Mucosa of descending colon (tissue), 3 donors: ENCODE measurements at regions of chr6 and their contacts with region 1.

Region 1: GRCh38 chr6:129598244-129599187 is 111.5 kb downstream of the ARHGAP18 start:
- DNase-seq: peak in 1 of 3 donors; percentile 42
- ATAC-seq: peak; percentile 85
- H3K4me3 ChIP-seq: no peak overlapping the region
- H3K4me1 ChIP-seq: no peaks in the 10 kb centered on the region
- CTCF ChIP-seq: peak; percentile 40

Region 2: DNA sequence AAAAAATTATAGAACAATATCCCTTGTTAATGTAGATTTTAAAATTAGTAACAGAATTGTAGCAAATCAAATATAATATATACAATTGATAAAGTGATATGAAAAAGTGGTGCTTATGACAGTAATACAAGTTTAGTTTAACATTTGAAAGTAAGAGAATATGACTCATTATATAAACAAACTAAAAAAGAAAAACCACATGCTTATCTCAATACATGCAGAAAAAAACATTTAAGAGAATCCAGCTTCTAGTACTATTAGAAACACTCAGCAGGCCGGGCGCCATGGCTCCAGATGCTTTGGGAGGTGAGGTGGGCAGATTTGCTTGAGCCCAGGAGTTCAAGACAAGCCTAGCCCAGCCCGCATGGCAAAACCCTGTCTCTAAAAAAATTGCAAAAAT is 776.2 kb before region 1 on chr6:
- intact Hi-C with region 1: no loop called
- DNase-seq: no peak
- ATAC-seq: no peak
- H3K4me3 ChIP-seq: no peak overlapping the region
- H3K4me1 ChIP-seq: no peaks in the 10 kb centered on the region
- CTCF ChIP-seq: no peak

Region 3: DNA sequence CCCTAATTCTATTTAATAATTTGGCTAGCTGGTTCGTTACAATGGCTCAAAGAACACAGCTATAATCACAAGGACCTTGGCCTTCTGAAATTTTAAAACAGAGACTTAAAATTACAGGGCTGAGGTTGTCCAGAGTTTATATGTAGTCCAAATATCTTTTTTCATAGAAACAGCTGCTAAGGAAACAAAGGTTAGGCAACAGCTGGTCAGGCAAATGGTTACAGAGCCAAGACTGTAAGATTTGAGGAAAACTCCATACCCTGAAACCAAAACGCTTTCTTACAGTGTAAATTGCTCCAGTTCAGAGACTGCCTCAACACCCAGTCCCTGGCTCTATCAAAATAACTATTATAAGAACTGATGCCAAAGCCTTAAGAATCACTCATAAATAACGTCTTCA is 121.2 kb after region 1 on chr6:
- intact Hi-C with region 1: loop called in 1 of 2 experiments (anchors 10 kb)
- DNase-seq: no peak
- ATAC-seq: no peak
- H3K4me3 ChIP-seq: no peak overlapping the region
- H3K4me1 ChIP-seq: no peaks in the 10 kb centered on the region
- CTCF ChIP-seq: no peak

Region 4: GRCh38 chr6:129730477-129731165 is 132.1 kb after region 1 on chr6:
- intact Hi-C with region 1: loop called (anchors 5 to 10 kb)
- DNase-seq: peak in 1 of 3 donors; percentile 53
- ATAC-seq: peak; percentile 46
- H3K4me3 ChIP-seq: no peak overlapping the region
- H3K4me1 ChIP-seq: no peaks in the 10 kb centered on the region
- CTCF ChIP-seq: peak; percentile 14

Region 5: DNA sequence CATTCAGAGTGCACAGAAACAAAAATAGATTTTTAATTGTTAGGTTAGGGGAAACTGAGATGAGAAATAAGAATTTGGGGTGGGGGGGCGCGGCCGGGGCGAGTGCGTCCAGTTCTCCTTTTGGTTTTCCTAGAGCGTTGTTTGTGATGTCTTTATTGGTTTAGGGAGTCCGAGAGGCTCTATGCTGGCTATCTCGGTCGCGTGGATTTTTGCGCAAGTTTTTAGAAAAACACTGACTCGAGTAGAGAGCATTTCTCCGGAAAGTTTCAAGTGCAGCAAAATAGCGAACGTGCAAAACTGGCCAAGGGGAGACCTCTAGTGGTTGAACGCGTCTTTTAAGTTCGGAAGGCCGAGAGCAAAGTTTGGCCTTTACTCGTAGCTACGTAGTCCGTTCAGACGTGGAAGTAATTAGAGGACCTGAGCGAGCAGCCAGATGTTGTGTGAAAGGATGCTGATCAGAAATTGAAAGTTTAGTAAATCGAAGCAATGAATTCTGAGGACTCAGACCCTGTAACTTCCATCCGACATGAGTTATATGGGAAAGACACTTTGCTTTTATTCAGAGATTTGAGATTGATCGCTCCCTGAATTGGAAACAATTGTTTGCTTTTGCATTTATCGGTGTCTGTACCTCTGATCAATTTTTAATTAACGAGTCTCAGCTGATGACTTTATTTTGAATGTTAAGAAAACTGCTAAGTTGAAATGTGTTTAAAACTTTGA is 422.6 kb after region 1 on chr6:
- intact Hi-C with region 1: loop called in 1 of 2 experiments (anchors 5 kb)
- DNase-seq: peak; percentile 57 to 93 (median 74)
- ATAC-seq: peak; percentile 84
- H3K4me3 ChIP-seq: peak overlapping the region; percentile 59
- H3K4me1 ChIP-seq: peaks cover 4% of the 10 kb centered on the region
- CTCF ChIP-seq: peak; percentile 58